Activated CD4-positive, alpha-beta T cell treated with anti-CD3 and anti-CD28 coated beads, Interleukin-2, amount 10 ng/mL, durations not matched to agents 7 days and 5 days (primary cell): ENCODE measurements at regions of chr10 and their contacts with region 1.

Region 1: DNA sequence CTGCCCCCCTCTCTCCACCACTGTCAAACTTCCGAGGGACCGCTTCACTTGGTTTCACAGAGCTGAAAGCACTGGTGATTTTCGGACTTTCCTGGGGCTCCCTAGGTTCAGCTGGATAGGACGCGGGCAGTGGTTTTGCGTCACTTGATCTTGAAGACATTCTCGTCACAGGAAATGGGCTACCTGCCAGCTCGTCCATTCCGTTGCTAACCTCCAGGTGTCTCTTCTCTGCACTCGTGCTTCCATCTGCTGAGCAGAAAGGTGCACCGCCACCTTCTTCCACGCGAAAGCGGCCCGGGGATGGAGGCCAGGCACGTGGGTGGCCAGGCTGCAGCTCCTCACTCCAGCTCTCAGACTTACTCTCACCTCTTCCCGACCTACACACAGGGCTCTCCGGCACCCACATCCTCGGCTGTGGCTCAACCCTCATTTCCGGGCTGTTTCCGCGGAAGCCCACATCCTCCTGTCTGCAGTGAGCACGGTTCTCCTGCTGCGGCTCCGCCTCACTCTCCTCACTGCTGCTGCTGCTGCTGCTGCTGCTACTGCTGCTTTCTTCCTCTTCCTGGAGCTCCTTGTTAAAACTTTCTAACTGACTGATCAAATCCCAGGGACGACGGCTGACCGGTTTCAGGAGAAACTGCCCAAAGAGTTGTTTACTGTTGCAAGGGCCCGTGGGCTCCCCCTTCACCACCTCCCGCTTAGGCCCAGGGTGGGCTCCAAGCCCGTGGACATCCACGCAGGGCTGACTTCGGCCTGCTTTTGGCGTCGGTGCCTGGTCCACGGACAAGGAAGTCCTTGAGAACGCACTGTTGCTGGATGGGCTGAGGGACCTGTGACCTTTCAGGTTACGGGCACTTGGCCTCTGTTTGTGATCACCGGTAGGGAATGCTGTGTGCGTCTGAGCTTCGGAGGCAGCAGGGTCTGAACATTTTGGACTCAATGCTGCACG is 32.1 kb downstream of the JCAD start:
- DNase-seq: peak; percentile 92
- H3K4me3 Mint-ChIP-seq: peak overlapping the region; percentile 64
- H3K27ac Mint-ChIP-seq: peak overlapping the region; percentile 80
- H3K4me1 Mint-ChIP-seq: peaks cover 39% of the 10 kb centered on the region
- H3K27me3 Mint-ChIP-seq: peaks cover 66% of the 10 kb centered on the region

Region 2: GRCh38 chr10:30011396-30011795 is 15.9 kb before region 1 on chr10:
- CTCF ChIA-PET with region 1: interaction called, 10 read pairs
- POLR2A ChIA-PET with region 1: no interaction called
- DNase-seq: no peak
- H3K4me3 Mint-ChIP-seq: no peak overlapping the region
- H3K27ac Mint-ChIP-seq: no peak overlapping the region
- H3K4me1 Mint-ChIP-seq: no peaks in the 10 kb centered on the region
- H3K27me3 Mint-ChIP-seq: peaks cover 55% of the 10 kb centered on the region

Region 3: GRCh38 chr10:30055226-30055662 is 27.9 kb after region 1 on chr10:
- CTCF ChIA-PET with region 1: no interaction called
- POLR2A ChIA-PET with region 1: no interaction called
- DNase-seq: no peak
- H3K4me3 Mint-ChIP-seq: no peak overlapping the region
- H3K27ac Mint-ChIP-seq: no peak overlapping the region
- H3K4me1 Mint-ChIP-seq: peaks cover 7% of the 10 kb centered on the region
- H3K27me3 Mint-ChIP-seq: peaks cover 60% of the 10 kb centered on the region